ENCODE measurements at regions of chr14 and their contacts with region 1.

Region 1: DNA sequence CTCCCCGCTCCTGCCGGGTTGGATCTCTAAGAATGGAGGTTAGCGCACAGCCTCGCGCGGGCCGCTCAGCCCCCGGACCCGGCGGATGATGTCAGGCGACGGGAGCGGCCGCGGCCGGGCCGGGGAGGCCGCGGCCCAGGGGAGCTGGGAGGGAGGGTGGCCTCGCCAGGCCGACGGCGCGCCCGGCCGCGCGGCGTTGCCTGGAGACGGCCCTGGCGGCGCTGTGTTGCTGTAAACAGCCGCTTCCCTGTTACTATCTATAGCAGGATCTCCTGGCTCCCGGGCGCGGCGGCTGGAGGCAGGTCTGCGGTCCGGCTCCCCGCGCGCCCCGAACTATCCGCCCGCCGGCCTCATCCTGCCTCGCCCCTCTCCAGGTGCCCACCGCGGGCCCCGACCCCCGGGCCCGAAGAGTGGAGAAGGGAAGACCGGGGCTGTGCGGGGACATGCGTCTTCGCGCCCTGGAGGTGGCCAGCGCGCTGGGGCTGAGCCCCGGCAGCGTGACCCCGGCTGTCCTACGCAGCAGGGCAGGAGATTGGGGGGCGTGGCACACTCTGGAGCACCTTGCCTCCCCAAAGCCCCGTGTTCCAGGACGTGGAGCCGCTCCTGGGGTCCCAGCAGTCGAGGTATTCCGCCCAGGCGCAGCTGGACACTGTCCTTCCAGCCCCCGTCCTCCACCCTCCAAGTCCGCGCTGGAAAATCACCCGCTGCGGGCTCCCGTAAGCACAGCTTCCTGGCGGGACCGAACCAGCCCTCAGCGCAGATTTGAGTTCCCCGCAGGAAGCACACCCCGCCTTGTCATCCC is 1.4 kb upstream of the FOS start:
- DNase-seq: no peak
- ATAC-seq: peak; percentile 74
- H3K4me3 ChIP-seq: peak overlapping the region; percentile 61 to 88
- H3K27ac ChIP-seq: no peak overlapping the region
- H3K4me1 ChIP-seq: no peaks in the 10 kb centered on the region
- H3K27me3 ChIP-seq: no peaks in the 10 kb centered on the region
- CTCF ChIP-seq: no peak

Region 2: GRCh38 chr14:75258615-75259466 is 18.4 kb before region 1 on chr14:
- CTCF ChIA-PET with region 1: no interaction called
- POLR2A ChIA-PET with region 1: interaction called, 10 read pairs
- in situ Hi-C with region 1: no loop called
- intact Hi-C with region 1: no loop called
- DNase-seq: peak; percentile 96
- ATAC-seq: peak; percentile 98
- H3K4me3 ChIP-seq: peak overlapping the region; percentile 55 to 62
- H3K27ac ChIP-seq: peak overlapping the region; percentile 79
- H3K4me1 ChIP-seq: peaks cover 14% of the 10 kb centered on the region
- H3K27me3 ChIP-seq: no peaks in the 10 kb centered on the region
- CTCF ChIP-seq: no peak

Region 3: GRCh38 chr14:75333606-75334548 is 56.7 kb after region 1 on chr14:
- CTCF ChIA-PET with region 1: no interaction called
- POLR2A ChIA-PET with region 1: no interaction called
- in situ Hi-C with region 1: no loop called
- intact Hi-C with region 1: no loop called
- DNase-seq: no peak
- ATAC-seq: no peak
- H3K4me3 ChIP-seq: no peak overlapping the region
- H3K27ac ChIP-seq: no peak overlapping the region
- H3K4me1 ChIP-seq: no peaks in the 10 kb centered on the region
- H3K27me3 ChIP-seq: no peaks in the 10 kb centered on the region; the same call in 1 of the 2 replicates
- CTCF ChIP-seq: no peak